Left ventricle myocardium superior (tissue), 1 donor: ENCODE measurements at regions of chr15 and their contacts with region 1.

Region 1: GRCh38 chr15:88904624-88905327 is 8.4 kb downstream of the MFGE8 start:
- DNase-seq: peak; percentile 87
- ATAC-seq: peak; percentile 69

Region 2: DNA sequence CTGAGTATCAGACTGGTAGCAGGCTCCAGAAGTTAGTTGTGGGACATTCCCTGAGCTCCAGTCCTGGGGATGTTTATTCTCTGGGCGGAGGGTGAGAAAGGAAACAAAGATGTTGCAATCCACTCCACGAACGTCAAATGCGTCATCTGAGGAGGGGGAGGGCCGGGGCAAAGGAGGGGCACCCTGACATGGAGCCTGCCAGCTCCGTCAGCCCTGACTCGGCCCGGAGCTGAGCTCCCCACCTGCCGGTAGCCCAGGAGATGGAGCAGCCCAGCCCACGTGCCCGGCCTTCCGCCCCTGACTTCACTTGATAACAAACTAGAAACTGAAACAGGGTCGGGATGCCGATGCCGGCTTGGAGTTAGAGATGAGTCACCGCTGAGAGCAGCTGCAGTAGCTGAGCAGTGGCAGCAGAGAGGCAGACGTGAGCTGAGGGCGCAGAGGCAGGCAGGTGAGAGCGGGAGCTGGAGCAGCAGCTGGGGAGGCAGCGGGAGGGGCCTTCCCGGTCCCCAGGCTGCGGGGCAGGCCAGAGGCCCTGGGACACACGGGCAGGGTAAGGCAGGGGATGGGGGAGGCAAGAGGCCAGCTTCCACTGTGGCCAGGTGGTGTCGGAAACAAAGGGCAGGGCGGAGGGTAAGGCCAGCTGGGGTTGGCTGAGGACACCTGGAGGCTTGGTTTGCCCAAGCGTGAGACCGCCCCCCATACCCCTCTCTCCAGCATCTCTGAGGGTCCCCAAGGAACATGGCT is 266.0 kb before region 1 on chr15 and contains the start of gene ISG20:
- intact Hi-C with region 1: no loop called
- DNase-seq: peak; percentile 88
- ATAC-seq: peak; percentile 90
- total RNA-seq, gene ISG20: 3.6 TPM

Region 3: GRCh38 chr15:88727439-88727838 is 177.3 kb before region 1 on chr15:
- intact Hi-C with region 1: no loop called
- DNase-seq: no peak
- ATAC-seq: peak; percentile 52

Region 4: GRCh38 chr15:88814393-88814792 is 90.4 kb before region 1 on chr15:
- intact Hi-C with region 1: no loop called
- DNase-seq: no peak
- ATAC-seq: no peak

Region 5: GRCh38 chr15:89004726-89005030 is 99.9 kb after region 1 on chr15:
- intact Hi-C with region 1: loop called (anchors 5 kb)
- DNase-seq: no peak
- ATAC-seq: no peak